AG04450 (cell line): ENCODE measurements at regions of chr1 and their contacts with region 1.

Region 1: DNA sequence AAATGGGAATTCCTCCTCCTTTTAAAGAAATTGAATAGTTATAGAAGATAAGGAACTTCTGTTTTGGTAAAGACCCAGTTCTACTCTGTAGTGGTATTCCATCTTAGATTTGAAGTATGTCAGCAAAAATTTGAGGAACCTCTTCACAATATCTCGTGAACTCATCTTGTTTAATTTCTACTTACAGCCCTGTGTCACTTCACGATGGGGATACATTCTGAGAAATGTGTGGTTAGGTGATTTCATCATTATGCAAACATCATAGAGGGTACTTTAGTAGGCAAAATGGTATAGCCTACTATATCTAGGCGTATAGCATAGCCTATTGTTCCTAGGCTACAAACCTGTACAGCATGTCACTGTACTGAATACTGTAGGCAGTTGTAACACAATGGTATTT is 36.0 kb downstream of the ALG6 start:
- DNase-seq: no peak
- H3K4me3 ChIP-seq: no peak overlapping the region
- H3K27ac ChIP-seq: no peak overlapping the region
- H3K27me3 ChIP-seq: no peaks in the 10 kb centered on the region
- CTCF ChIP-seq: no peak

Region 2: GRCh38 chr1:63173161-63173560 is 230.2 kb before region 1 on chr1:
- CTCF ChIA-PET with region 1: no interaction called
- POLR2A ChIA-PET with region 1: no interaction called
- DNase-seq: no peak
- H3K4me3 ChIP-seq: no peak overlapping the region
- H3K27ac ChIP-seq: no peak overlapping the region
- H3K27me3 ChIP-seq: no peaks in the 10 kb centered on the region
- CTCF ChIP-seq: no peak

Region 3: GRCh38 chr1:63442141-63442475 is 38.7 kb after region 1 on chr1:
- CTCF ChIA-PET with region 1: interaction called, 10 read pairs
- POLR2A ChIA-PET with region 1: no interaction called
- DNase-seq: no peak
- H3K4me3 ChIP-seq: no peak overlapping the region
- H3K27ac ChIP-seq: no peak overlapping the region
- H3K27me3 ChIP-seq: no peaks in the 10 kb centered on the region
- CTCF ChIP-seq: no peak